ENCODE measurements at regions of chr1 and their contacts with region 1.

Region 1: GRCh38 chr1:109790735-109791494 is 27.2 kb upstream of the EPS8L3 start:
- DNase-seq: peak in 1 of 2 experiments; percentile 61
- ATAC-seq: no peak
- H3K4me3 ChIP-seq: no peak overlapping the region
- H3K27ac ChIP-seq: peak overlapping the region; percentile 98
- H3K4me1 ChIP-seq: peaks cover 74% of the 10 kb centered on the region
- CTCF ChIP-seq: no peak
- EP300 ChIP-seq: no peak
- POLR2A ChIP-seq: no peak
- RAD21 ChIP-seq: no peak; a peak in 1 of 5 replicates

Region 2: DNA sequence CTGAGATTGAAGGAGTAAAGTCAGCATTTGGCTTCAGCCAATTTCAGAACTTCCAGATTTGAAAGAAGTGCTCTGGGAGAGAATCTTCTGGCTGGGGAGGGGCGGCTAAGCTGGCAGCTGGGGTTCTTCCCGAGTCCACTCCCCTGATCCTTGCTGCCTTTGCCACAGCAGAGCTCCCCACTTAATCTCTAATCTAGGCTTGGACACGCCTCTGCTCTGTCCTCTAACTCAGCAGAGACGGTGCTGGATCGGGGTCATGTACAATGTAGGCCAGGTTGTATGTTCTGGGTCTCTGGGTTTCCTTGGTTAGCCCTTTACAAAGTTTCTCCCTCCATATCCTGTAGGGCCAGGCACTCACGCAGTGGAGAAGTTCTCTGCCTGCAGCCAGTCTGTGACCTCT is 40.0 kb before region 1 on chr1:
- CTCF ChIA-PET with region 1: no interaction called
- POLR2A ChIA-PET with region 1: no interaction called
- DNase-seq: no peak
- ATAC-seq: no peak
- H3K4me3 ChIP-seq: no peak overlapping the region
- H3K27ac ChIP-seq: no peak overlapping the region
- H3K4me1 ChIP-seq: no peaks in the 10 kb centered on the region
- CTCF ChIP-seq: no peak
- EP300 ChIP-seq: no peak
- POLR2A ChIP-seq: no peak
- RAD21 ChIP-seq: no peak

Region 3: GRCh38 chr1:109807822-109808680 is 17.1 kb after region 1 on chr1:
- CTCF ChIA-PET with region 1: interaction called, 26 read pairs
- POLR2A ChIA-PET with region 1: no interaction called
- DNase-seq: peak in 1 of 2 experiments; percentile 45
- ATAC-seq: peak; percentile 75 to 88; a peak in 5 of 6 replicates
- H3K4me3 ChIP-seq: no peak overlapping the region
- H3K27ac ChIP-seq: peak overlapping the region; percentile 60 to 86
- H3K4me1 ChIP-seq: peaks cover 18% of the 10 kb centered on the region
- CTCF ChIP-seq: no peak
- EP300 ChIP-seq: no peak
- POLR2A ChIP-seq: no peak
- RAD21 ChIP-seq: no peak

Region 4: GRCh38 chr1:109959974-109960744 is 169.2 kb after region 1 on chr1:
- CTCF ChIA-PET with region 1: interaction called, 11 read pairs
- POLR2A ChIA-PET with region 1: interaction called, 5 read pairs
- DNase-seq: peak; percentile 87 to 96
- ATAC-seq: peak; percentile 96 to 98
- H3K4me3 ChIP-seq: no peak overlapping the region
- H3K27ac ChIP-seq: peak overlapping the region; percentile 95 to 96
- H3K4me1 ChIP-seq: peaks cover 52% of the 10 kb centered on the region
- CTCF ChIP-seq: peak; percentile 27; the same call in 1 of the 3 replicates
- EP300 ChIP-seq: peak; percentile 15 to 84; a peak in 3 of 5 replicates
- POLR2A ChIP-seq: no peak
- RAD21 ChIP-seq: peak; percentile 46 to 47

Region 5: GRCh38 chr1:110060034-110060661 is 269.2 kb after region 1 on chr1:
- CTCF ChIA-PET with region 1: no interaction called
- POLR2A ChIA-PET with region 1: no interaction called
- DNase-seq: peak; percentile 29 to 52
- ATAC-seq: peak; percentile 55 to 86; a peak in 3 of 6 replicates
- H3K4me3 ChIP-seq: no peak overlapping the region
- H3K27ac ChIP-seq: no peak overlapping the region
- H3K4me1 ChIP-seq: no peaks in the 10 kb centered on the region
- CTCF ChIP-seq: peak; percentile 52
- EP300 ChIP-seq: no peak
- POLR2A ChIP-seq: no peak
- RAD21 ChIP-seq: 0 out of 5 replicates have a peak, but pooled peaks of 1 of the 2 experiments have one; percentile 11